CD4-positive, alpha-beta T cell (primary cell): ENCODE measurements at regions of chr6 and their contacts with region 1.

Region 1: DNA sequence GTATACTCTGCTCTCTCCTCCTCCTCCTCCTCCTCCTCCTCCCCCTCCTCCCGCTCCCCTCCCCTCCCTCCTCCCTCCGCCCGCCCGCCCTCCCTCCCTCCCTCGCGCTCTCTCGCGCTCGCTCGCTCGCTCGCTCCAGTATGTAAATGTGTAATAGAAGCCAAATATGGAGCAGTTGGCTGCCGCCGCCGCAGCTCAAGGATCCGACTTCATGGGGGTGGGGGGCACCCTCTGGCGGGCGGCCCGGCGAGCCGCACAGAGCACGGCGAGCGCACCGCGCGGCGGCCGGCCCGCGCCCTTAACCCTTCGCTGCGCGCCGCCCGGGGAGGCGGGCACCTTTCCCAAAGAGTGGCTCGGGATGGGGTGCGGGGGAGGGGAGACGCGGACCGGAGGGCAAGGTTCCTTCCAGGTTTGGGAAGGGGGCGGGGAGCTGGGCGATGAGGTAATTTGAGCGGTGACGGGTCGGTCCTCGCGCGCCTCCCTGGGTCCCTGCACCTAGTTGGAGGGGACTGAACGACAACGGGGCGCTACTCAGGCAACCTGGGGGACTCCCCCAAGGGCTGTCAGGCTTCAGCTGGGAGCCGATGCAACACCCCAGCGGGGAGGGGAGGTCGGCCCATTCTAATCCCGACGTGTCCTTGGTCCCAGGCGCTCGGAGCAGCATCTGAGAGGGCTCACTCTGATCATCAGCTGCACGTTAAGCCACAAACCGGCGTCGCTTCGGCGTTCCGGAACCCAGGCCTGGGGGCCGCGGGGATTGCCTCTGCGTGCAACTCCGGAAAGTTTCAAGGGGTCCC is 409 bp upstream of the ATXN1 start:
- DNase-seq: peak; percentile 70 to 94 (median 80)
- ATAC-seq: peak; percentile 58
- H3K4me3 ChIP-seq: peak overlapping the region; percentile 72
- H3K4me3 Mint-ChIP-seq: peak overlapping the region; percentile 99
- H3K27ac ChIP-seq: peak overlapping the region; percentile 97 to 98
- H3K27ac Mint-ChIP-seq: peak overlapping the region; percentile 98
- H3K4me1 ChIP-seq: peaks cover 23% of the 10 kb centered on the region
- H3K4me1 Mint-ChIP-seq: peaks cover 65% of the 10 kb centered on the region
- H3K27me3 ChIP-seq: no peaks in the 10 kb centered on the region
- H3K27me3 Mint-ChIP-seq: peaks cover 4% of the 10 kb centered on the region
- CTCF ChIP-seq: peak; percentile 5

Region 2: DNA sequence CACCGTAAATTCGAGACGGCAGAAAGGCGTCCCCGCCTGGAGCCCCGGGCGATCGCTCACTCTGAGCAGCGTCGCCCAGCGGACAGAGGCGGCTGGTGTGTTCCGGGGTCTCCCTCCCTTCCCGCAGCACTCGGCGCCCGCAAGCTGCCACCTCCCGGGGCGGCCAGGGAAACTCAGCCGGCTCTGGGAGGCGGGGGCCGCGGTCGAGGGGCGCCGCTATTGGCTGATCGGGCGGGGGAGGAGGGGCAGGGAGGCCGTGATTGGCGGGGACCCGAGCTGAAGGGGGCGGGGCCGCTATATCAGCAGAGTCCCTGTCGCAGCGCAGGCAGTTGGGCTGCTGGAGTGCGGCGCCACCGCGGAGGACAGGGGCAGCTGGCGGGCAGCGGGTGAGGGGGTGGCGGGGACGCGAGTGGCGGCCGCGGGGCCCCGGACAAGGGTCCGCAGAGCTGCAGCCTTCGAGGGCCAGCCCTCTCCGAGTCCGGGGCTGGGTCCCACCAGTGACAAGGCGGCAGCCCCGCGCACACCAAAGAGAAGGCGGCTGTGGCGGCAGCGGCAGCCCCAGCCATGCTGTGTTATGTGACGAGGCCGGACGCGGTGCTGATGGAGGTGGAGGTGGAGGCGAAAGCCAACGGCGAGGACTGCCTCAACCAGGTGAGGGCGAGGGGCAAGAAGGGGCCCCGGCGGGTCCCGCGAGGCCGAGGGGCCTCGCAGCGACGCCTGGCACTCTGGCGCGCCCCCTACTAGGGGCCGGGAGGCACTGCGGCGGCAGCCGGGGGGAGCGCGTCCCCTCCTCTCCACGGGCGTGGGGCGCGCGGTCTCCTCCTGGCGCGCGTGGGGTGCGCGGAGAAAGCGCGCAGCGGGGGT is 632.7 kb before region 1 on chr6 and contains the start of gene MYLIP:
- CTCF ChIA-PET with region 1: interaction called, 3 read pairs
- POLR2A ChIA-PET with region 1: interaction called, 4 read pairs
- intact Hi-C with region 1: loop called in 1 of 2 experiments (anchors 10 kb)
- DNase-seq: peak; percentile 96 to 99 (median 97)
- ATAC-seq: peak; percentile 78
- H3K4me3 ChIP-seq: peak within 1 kb of the TSS; percentile 83
- H3K4me3 Mint-ChIP-seq: peak within 1 kb of the TSS; percentile 99
- H3K27ac ChIP-seq: peak within 1 kb of the TSS; percentile 89 to 92
- H3K27ac Mint-ChIP-seq: peak within 1 kb of the TSS; percentile 98
- H3K4me1 ChIP-seq: peaks cover 19% of the 10 kb centered on the region
- H3K4me1 Mint-ChIP-seq: peaks cover 37% of the 10 kb centered on the region
- H3K27me3 ChIP-seq: no peaks in the 10 kb centered on the region
- H3K27me3 Mint-ChIP-seq: no peaks in the 10 kb centered on the region
- CTCF ChIP-seq: peak; percentile 66
- total RNA-seq, gene MYLIP: 324 TPM

Region 3: DNA sequence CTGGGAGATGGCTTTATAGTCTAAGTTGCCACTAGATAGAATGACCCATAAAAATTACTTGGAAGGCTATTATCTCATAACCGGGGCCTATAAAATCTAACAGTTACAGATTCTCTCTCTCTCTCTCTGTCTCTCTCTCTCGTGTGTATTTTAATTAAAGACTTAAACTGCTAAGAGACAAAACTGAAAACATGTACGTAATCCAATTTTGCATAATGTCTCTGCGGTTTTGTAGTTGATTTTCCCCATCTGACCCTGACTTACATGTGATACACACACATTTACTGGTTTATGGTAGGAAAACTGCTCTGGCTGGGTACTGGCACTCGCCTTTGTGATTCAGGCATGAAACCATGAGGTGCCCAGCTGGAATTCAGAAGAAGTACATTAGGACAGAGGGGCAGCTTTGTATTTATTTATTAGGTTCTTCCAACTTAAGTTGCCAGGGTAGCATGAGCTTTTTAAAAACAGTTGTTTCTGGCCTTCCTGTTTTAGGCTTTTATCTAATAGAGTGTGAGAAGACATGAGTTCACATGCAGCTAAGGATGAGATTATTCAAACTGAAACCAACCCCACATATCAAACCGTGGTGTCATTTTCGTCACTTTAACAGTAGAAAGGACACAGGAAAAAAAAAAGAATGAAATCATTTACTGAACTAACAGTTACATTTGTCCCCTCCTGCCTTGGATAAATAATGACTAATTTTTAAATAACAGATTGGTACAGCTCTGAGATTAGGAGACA is 340.8 kb before region 1 on chr6:
- CTCF ChIA-PET with region 1: interaction called, 3 read pairs
- POLR2A ChIA-PET with region 1: interaction called, 5 read pairs
- intact Hi-C with region 1: loop called in 1 of 2 experiments (anchors 5 kb)
- DNase-seq: peak in 7 of 14 experiments; percentile 33 to 85 (median 38)
- ATAC-seq: peak; percentile 78
- H3K4me3 ChIP-seq: peak overlapping the region; percentile 30
- H3K4me3 Mint-ChIP-seq: peak overlapping the region; percentile 59
- H3K27ac ChIP-seq: peak overlapping the region; percentile 62 to 84
- H3K27ac Mint-ChIP-seq: peak overlapping the region; percentile 96
- H3K4me1 ChIP-seq: peaks cover 37% of the 10 kb centered on the region
- H3K4me1 Mint-ChIP-seq: peaks cover 42% of the 10 kb centered on the region
- H3K27me3 ChIP-seq: no peaks in the 10 kb centered on the region
- H3K27me3 Mint-ChIP-seq: no peaks in the 10 kb centered on the region
- CTCF ChIP-seq: no peak

Region 4: DNA sequence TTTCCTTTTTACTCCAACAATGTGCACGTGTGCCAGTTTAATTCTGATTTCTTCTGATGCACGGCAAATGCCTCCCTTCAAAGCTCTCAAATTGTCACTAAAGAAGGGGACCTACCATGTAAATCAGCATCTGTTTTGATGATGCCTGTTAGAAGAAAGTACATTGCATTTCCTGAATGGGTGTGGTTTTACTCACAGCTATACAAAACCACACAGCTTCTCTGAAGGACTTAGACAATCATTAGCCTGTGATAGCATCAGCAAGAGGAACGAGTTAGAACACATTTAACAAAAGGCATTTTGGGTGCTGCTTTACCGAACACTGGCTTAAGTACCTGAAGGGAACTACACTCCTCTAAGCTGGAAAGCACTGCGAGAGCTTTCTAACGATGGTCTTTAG is 109.8 kb before region 1 on chr6:
- CTCF ChIA-PET with region 1: interaction called, 4 read pairs
- POLR2A ChIA-PET with region 1: interaction called, 23 read pairs
- intact Hi-C with region 1: loop called in 1 of 2 experiments (anchors 5 kb)
- DNase-seq: peak in 3 of 14 experiments; percentile 72 to 82 (median 77)
- ATAC-seq: peak; percentile 87
- H3K4me3 ChIP-seq: no peak overlapping the region
- H3K4me3 Mint-ChIP-seq: peak overlapping the region; percentile 62
- H3K27ac ChIP-seq: peak overlapping the region in 1 of 2 donors; percentile 26
- H3K27ac Mint-ChIP-seq: peak overlapping the region; percentile 78
- H3K4me1 ChIP-seq: peaks cover 47% of the 10 kb centered on the region
- H3K4me1 Mint-ChIP-seq: peaks cover 55% of the 10 kb centered on the region
- H3K27me3 ChIP-seq: no peaks in the 10 kb centered on the region
- H3K27me3 Mint-ChIP-seq: no peaks in the 10 kb centered on the region
- CTCF ChIP-seq: no peak

Region 5: DNA sequence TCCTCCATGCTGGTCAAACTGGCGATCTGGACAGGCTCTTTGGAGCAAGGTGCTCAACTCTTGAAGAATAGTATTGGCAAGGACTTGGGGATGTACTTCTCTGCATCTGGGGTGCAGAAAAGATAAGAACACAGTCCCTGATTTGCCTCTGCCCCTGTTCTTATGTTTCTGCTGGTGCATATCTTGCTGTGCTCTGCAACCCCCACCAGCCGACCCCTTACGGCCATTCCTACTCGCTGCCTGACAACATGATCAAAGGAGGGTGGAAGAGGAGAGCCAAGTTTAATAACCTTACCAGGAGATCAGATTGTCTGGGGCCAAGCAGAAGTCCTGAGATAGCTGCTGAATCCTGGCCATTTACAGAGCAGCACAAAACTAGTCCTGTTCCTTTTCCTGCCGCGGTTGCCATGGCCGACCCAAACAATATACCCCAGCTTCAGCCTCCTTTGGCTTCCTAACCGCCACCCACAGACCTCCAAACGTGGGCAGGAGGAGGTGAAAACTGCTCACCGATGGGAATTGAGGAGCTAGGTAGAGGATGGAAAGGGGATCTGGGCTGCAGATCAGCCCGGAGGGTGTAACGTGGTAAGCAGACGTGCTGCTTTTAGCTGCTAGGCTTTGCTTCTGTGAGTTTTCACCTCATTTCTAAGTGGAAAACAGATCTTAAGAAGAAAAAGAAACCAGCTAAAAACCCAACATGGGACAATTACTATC is 61.3 kb before region 1 on chr6:
- CTCF ChIA-PET with region 1: interaction called, 10 read pairs
- POLR2A ChIA-PET with region 1: interaction called, 15 read pairs
- intact Hi-C with region 1: no loop called
- DNase-seq: peak in 9 of 14 experiments; percentile 14 to 77 (median 27)
- ATAC-seq: peak; percentile 48
- H3K4me3 ChIP-seq: peak overlapping the region; percentile 66
- H3K4me3 Mint-ChIP-seq: peak overlapping the region; percentile 85
- H3K27ac ChIP-seq: peak overlapping the region; percentile 2 to 80
- H3K27ac Mint-ChIP-seq: peak overlapping the region; percentile 68
- H3K4me1 ChIP-seq: peaks cover 49% of the 10 kb centered on the region
- H3K4me1 Mint-ChIP-seq: peaks cover 68% of the 10 kb centered on the region
- H3K27me3 ChIP-seq: no peaks in the 10 kb centered on the region
- H3K27me3 Mint-ChIP-seq: no peaks in the 10 kb centered on the region
- CTCF ChIP-seq: no peak

Region 6: DNA sequence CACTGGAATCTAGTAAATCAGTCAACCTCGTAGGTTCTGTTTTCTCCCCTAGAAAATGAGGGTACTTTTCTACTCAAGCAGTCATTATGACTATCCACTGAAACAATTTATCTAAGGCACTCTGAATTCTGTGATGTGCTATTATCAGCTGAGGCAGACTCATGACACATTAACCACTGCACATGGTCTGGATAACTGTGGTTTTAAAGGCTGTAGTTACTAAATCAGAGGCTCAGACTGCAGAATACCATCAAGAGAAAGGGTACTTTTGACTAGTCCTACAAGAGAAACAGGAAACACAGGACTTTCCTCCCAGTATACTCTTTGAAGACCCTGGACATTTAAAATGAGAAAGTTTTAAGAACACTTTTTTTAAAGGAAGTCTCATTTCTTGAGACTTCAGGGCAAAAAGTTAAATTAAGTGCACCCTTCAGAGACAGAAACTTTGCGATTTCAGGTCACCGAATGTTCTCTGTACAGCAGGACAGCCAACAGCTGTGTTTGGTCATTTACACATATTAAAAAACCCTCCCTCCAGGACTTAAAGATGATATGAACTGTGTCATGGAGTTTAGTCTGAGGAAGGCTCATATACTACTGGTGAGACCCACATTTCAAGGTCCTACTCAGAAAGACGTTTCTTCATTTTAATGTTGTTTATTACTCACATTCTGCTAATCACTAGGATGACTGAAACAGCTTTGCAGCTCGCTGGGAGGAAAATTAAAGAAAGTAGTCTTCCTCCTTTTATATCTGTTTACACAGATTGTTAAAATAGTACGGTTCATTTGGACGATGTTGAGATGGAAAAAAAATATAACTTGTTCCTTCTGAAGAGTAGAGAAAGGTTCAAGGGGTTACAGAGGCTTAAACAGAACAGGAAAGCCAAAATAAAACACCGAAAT is 20.3 kb before region 1 on chr6:
- CTCF ChIA-PET with region 1: interaction called, 9 read pairs
- POLR2A ChIA-PET with region 1: interaction called, 23 read pairs
- intact Hi-C with region 1: loop called in 1 of 2 experiments (anchors 2 kb)
- DNase-seq: peak in 2 of 14 experiments; percentile 35 to 47
- ATAC-seq: peak; percentile 54
- H3K4me3 ChIP-seq: no peak overlapping the region
- H3K4me3 Mint-ChIP-seq: no peak overlapping the region
- H3K27ac ChIP-seq: no peak overlapping the region
- H3K27ac Mint-ChIP-seq: peak overlapping the region; percentile 2
- H3K4me1 ChIP-seq: peaks cover 12% of the 10 kb centered on the region
- H3K4me1 Mint-ChIP-seq: peaks cover 83% of the 10 kb centered on the region
- H3K27me3 ChIP-seq: no peaks in the 10 kb centered on the region
- H3K27me3 Mint-ChIP-seq: no peaks in the 10 kb centered on the region
- CTCF ChIP-seq: no peak

Region 7: GRCh38 chr6:17706580-17707370 is 945.1 kb after region 1 on chr6 and contains the start of gene NUP153:
- CTCF ChIA-PET with region 1: no interaction called
- POLR2A ChIA-PET with region 1: interaction called, 7 read pairs
- intact Hi-C with region 1: loop called (anchors 5 to 10 kb)
- DNase-seq: peak; percentile 98 to 100 (median 100)
- ATAC-seq: peak; percentile 79
- H3K4me3 ChIP-seq: peak within 1 kb of the TSS; percentile 82
- H3K4me3 Mint-ChIP-seq: peak within 1 kb of the TSS; percentile 95
- H3K27ac ChIP-seq: peak within 1 kb of the TSS; percentile 98 to 99
- H3K27ac Mint-ChIP-seq: peak within 1 kb of the TSS; percentile 93
- H3K4me1 ChIP-seq: peaks cover 41% of the 10 kb centered on the region
- H3K4me1 Mint-ChIP-seq: peaks cover 48% of the 10 kb centered on the region
- H3K27me3 ChIP-seq: no peaks in the 10 kb centered on the region
- H3K27me3 Mint-ChIP-seq: no peaks in the 10 kb centered on the region
- CTCF ChIP-seq: no peak
- total RNA-seq, gene NUP153: 58.3 to 61.0 TPM